ENCODE measurements at regions of chr12 and their contacts with region 1.

Region 1: DNA sequence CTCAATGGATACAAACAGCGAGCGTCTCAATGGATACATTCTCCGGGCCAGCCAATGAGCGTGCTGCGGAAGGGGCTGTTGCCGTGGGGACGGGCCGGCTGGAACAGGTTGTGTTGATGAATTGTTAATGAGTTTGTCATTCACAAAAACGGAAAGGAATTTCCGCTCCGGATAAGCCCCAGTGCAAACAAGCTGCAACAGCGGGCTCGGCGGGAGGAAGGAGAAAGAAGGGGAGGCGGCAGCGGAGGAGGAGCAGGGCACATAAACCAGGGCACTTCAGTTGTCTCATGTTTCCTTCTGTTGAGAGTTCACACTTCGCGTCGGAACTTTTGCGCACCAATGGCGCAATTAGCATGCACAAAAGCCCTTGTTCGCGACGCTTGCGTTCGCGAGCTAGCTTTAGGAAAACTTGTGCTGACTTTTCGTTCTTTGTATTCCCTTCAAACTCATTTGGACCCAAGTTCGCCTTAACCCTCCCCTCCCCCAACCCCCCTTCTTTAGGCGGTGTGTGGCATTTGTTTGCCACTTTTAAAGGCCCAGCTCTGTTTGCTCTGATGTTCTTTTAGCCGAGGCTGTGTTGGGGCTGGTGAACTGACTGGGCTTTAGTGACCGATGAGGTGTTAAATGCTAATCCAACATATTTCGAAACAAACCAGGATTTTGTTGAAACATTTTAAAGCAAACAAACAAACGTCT is at the start of gene DUSP6:
- DNase-seq: peak; percentile 97
- H3K4me3 Mint-ChIP-seq: peak within 1 kb of the TSS; percentile 89
- H3K27ac Mint-ChIP-seq: peak within 1 kb of the TSS; percentile 92
- H3K4me1 Mint-ChIP-seq: peaks cover 29% of the 10 kb centered on the region
- H3K27me3 Mint-ChIP-seq: peaks cover 2% of the 10 kb centered on the region
- total RNA-seq, gene DUSP6: 24.8 to 26.1 TPM

Region 2: GRCh38 chr12:88141770-88142609 is 1210.7 kb before region 1 on chr12 and contains the starts of genes CEP290 and TMTC3:
- CTCF ChIA-PET with region 1: no interaction called
- intact Hi-C with region 1: loop called (anchors 1 kb)
- DNase-seq: peak; percentile 95
- H3K4me3 Mint-ChIP-seq: peak within 1 kb of the TSS; percentile 91
- H3K27ac Mint-ChIP-seq: peak within 1 kb of the TSS; percentile 90
- H3K4me1 Mint-ChIP-seq: peaks cover 40% of the 10 kb centered on the region
- H3K27me3 Mint-ChIP-seq: no peaks in the 10 kb centered on the region
- total RNA-seq, gene CEP290: 12.7 to 13.6 TPM
- total RNA-seq, gene TMTC3: 5.2 TPM

Region 3: DNA sequence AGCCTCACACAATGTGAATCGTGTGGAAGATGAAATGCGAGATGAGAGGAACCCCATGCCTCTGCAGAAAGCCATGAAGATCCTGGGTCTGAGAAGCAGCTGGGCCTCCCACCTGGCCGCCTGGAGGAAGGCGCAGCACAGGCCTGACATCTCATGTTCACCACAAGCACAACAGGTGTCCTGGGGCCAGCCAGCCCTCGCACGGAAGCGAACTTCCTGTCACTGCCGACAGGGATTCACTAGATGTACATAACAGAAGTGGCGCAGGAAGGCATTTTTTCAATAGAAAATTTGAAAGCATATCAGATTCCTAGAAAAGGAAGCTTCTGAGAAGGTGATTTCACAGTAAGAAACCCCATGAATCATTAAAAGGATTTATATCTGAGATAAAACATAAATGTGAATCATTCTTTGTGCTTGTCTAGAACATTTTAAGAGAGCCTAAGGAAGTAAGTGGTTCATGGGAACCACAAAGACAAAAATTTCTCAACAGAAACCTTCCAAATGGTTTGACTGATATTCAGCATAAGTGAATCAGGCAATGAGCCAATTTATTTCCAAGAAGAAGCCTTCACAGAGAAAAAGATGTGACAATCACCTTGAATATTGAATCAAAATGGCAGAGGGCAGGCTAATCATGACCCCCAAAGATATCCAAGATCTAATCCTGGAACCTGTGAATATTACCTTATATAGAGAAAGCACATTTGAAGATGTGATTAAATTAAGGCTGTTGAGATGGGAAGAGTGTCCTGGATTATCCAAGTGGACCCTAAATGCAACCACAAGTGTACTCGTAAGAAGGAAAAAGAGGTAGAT is 312.3 kb before region 1 on chr12:
- CTCF ChIA-PET with region 1: interaction called, 3 read pairs
- intact Hi-C with region 1: loop called (anchors 1 kb)
- DNase-seq: peak; percentile 94
- H3K4me3 Mint-ChIP-seq: no peak overlapping the region
- H3K27ac Mint-ChIP-seq: peak overlapping the region; percentile 82
- H3K4me1 Mint-ChIP-seq: peaks cover 46% of the 10 kb centered on the region
- H3K27me3 Mint-ChIP-seq: no peaks in the 10 kb centered on the region

Region 4: GRCh38 chr12:89135976-89136634 is 216.5 kb before region 1 on chr12:
- CTCF ChIA-PET with region 1: no interaction called
- intact Hi-C with region 1: loop called (anchors 1 kb)
- DNase-seq: peak; percentile 9
- H3K4me3 Mint-ChIP-seq: no peak overlapping the region
- H3K27ac Mint-ChIP-seq: no peak overlapping the region
- H3K4me1 Mint-ChIP-seq: peaks cover 22% of the 10 kb centered on the region
- H3K27me3 Mint-ChIP-seq: no peaks in the 10 kb centered on the region

Region 5: DNA sequence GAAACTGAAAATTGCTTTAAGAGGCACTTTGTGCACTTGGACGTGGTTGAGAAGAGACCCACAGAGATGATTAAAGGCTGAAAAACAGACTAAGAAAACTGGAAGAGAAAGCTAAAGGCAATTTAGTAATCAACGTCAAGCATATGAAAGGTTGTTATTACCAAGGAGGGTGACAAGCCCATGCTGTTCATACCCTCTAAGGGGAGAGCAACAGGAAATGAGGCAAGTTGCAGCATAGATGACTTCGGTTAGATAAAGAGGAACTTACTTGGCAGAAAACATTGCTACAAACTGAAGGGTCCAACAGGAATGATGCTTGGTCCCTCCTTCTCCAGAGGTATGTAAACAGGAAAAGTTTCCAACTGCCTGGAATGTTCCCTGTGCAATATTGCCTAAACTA is 108.1 kb before region 1 on chr12:
- CTCF ChIA-PET with region 1: interaction called, 3 read pairs
- intact Hi-C with region 1: loop called (anchors 1 kb)
- DNase-seq: peak; percentile 57
- H3K4me3 Mint-ChIP-seq: peak overlapping the region; percentile 36
- H3K27ac Mint-ChIP-seq: peak overlapping the region; percentile 73
- H3K4me1 Mint-ChIP-seq: peaks cover 33% of the 10 kb centered on the region
- H3K27me3 Mint-ChIP-seq: no peaks in the 10 kb centered on the region

Region 6: DNA sequence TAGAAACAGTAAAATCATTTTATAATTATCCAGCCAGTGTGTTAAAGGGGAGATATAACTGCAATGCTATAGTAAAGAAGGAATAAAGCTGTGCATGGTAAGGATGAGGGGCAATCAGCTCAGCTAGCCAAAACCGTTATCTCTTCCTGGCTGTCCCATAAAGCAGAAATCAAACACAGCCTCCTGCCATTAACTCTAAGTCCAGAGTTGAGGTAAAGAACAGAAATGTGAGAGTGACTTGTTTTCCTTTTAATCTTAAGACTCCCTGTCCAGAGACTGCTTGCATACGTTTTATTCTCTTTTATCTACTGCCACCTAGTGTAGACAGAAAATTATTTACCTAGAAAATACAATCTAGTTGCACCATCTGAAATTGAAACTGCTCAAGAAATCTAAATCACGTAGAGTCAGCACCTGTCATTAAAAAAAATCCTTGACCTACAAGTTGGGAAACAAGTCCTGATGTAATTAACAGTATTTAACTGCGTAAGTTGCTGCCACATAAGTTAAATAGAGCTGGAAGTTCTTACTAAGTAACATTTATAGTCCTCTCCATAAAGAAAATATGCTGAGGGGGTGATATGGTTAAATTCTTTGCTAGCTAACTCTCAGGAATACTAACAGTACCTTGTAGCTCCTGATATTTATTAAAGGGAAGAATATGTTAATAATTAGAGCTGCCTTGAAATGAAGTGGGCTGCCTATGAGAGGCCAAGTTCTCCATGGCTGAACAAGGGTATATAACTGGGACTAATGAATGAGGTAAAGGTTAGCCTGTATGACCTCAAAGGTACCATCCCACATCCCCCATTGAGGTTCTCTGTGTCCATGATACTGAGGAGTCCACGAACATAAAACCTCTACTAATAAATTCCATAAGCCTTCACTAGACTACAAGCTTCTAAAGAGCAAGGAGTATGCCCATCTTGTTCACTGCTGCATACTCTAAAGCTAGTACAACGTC is 109.3 kb after region 1 on chr12:
- CTCF ChIA-PET with region 1: interaction called, 7 read pairs
- intact Hi-C with region 1: loop called (anchors 1 kb)
- DNase-seq: no peak
- H3K4me3 Mint-ChIP-seq: peak overlapping the region; percentile 15
- H3K27ac Mint-ChIP-seq: peak overlapping the region; percentile 48
- H3K4me1 Mint-ChIP-seq: peaks cover 13% of the 10 kb centered on the region
- H3K27me3 Mint-ChIP-seq: no peaks in the 10 kb centered on the region

Region 7: DNA sequence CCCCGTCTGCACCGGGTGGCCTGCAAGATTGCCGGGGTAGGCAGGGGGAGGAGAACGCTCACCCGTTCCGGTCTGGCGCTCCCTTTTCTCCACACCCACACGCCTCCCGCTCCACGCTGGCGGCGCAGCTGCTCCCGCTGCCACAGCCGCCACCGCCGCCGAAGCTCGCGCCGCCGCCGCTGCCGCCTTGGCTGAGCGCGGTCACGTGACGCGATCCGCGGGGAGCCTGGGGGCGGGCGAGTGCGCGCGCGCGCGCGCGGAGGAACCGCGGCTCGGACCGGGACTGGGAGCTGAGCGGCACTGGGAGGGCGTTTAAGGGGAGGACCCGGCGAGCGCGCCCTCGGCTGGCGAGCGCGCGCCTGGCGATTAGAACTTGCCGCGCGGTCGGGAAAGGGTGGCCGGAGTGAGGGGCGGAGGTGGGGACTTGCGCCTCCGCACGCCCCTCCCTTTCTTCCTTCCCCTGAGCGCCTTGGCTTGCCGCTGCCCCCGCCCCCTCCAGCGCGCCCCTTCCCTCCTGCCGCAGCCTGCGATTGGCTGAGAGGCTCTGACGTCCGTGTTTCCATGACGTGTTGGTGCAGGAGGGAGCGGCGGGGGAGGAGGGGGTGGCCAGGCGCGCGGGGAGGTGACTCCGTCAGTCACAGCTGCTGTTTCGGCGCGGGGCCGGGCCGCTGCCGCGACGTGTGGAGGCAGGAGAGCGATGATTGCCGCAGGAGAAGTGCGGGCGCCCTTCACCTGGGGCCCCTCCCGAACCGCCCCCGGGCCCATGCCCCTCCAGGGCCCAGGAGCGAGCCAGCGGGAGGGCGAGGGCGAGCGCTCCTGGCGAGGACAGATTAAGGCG is 356.7 kb after region 1 on chr12:
- CTCF ChIA-PET with region 1: no interaction called
- intact Hi-C with region 1: loop called (anchors 1 kb)
- DNase-seq: peak; percentile 99
- H3K4me3 Mint-ChIP-seq: peak overlapping the region; percentile 79
- H3K27ac Mint-ChIP-seq: peak overlapping the region; percentile 71
- H3K4me1 Mint-ChIP-seq: peaks cover 32% of the 10 kb centered on the region
- H3K27me3 Mint-ChIP-seq: no peaks in the 10 kb centered on the region

Region 8: DNA sequence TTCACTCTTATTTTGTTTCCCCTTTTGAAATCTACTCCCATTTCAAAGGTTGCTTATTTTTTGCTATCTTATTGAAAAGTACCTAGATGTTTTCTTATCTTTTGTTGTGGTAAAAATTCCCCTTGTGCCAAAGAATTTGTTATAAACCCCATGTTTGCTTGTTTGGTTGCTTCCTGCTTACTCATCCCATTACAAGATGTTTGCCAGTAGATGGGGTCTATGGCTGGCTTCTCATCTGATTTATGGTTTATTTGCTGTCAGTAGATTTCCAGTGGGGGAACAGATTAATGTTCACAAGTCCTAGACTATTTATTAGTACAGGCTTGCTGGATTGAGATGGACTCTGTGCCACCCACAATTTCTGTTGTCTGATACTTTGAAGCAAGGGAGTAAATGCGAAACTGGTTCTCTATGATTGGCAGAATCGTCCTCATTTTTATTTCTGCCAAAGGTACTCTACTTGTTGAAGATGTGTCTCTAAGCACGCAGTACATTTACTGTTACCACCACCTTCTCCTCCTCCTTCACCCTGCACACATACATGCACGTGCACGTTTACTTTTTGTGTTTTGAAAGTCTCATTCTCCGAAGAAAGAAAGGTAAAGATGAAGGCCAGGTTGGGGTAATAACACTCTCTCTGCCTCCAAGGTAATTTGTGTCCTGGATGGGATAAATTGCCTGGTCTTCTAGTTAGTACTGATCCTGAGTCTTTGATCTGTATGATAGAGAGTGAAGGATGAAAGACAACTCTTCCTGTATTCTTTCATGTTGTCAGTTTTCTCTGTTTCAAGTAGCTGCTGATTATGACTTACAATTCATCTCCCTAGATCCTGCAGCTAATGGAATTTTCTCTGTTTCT is 473.2 kb after region 1 on chr12:
- CTCF ChIA-PET with region 1: no interaction called
- intact Hi-C with region 1: no loop called
- DNase-seq: no peak
- H3K4me3 Mint-ChIP-seq: no peak overlapping the region
- H3K27ac Mint-ChIP-seq: no peak overlapping the region
- H3K4me1 Mint-ChIP-seq: peaks cover 13% of the 10 kb centered on the region
- H3K27me3 Mint-ChIP-seq: peaks cover 2% of the 10 kb centered on the region